Panc1 (cell line): ENCODE measurements at regions of chr10 and their contacts with region 1.

Region 1: DNA sequence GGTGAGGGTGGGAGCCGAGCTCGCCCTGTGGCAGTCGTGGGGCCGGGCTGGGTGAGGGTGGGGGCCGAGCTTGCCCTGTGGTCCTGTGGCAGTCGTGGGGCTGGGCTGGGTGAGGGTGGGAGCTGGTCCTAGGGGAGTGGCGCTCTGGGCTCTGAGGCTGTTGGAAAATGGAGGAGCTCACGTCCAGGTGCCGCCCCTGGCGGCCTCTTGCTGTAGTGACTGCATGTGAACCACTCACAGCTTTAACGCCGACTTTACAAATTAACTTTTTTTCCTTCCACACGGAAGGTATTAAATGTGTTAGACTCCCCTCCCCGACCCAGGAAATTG is 312.6 kb downstream of the WDR37 start:
- DNase-seq: no peak
- ATAC-seq: peak; percentile 84
- H3K4me3 ChIP-seq: no peak overlapping the region
- H3K27ac ChIP-seq: no peak overlapping the region
- H3K4me1 ChIP-seq: no peaks in the 10 kb centered on the region
- H3K27me3 ChIP-seq: no peaks in the 10 kb centered on the region
- CTCF ChIP-seq: peak; percentile 73

Region 2: GRCh38 chr10:1089017-1089689 is 279.7 kb before region 1 on chr10:
- CTCF ChIA-PET with region 1: interaction called, 13 read pairs
- POLR2A ChIA-PET with region 1: no interaction called
- in situ Hi-C with region 1: no loop called
- intact Hi-C with region 1: no loop called
- DNase-seq: no peak
- ATAC-seq: no peak
- H3K4me3 ChIP-seq: no peak overlapping the region
- H3K27ac ChIP-seq: no peak overlapping the region
- H3K4me1 ChIP-seq: no peaks in the 10 kb centered on the region
- H3K27me3 ChIP-seq: no peaks in the 10 kb centered on the region
- CTCF ChIP-seq: no peak

Region 3: GRCh38 chr10:1404323-1405260 is 35.8 kb after region 1 on chr10:
- CTCF ChIA-PET with region 1: interaction called, 10 read pairs
- POLR2A ChIA-PET with region 1: no interaction called
- in situ Hi-C with region 1: no loop called
- intact Hi-C with region 1: no loop called
- DNase-seq: no peak
- ATAC-seq: no peak
- H3K4me3 ChIP-seq: no peak overlapping the region
- H3K27ac ChIP-seq: no peak overlapping the region
- H3K4me1 ChIP-seq: no peaks in the 10 kb centered on the region; the same call in 1 of the 2 replicates
- H3K27me3 ChIP-seq: no peaks in the 10 kb centered on the region
- CTCF ChIP-seq: no peak

Region 4: GRCh38 chr10:1581189-1581588 is 212.4 kb after region 1 on chr10:
- CTCF ChIA-PET with region 1: interaction called, 15 read pairs
- POLR2A ChIA-PET with region 1: no interaction called
- in situ Hi-C with region 1: no loop called
- intact Hi-C with region 1: no loop called
- DNase-seq: no peak
- ATAC-seq: no peak
- H3K4me3 ChIP-seq: no peak overlapping the region
- H3K27ac ChIP-seq: no peak overlapping the region
- H3K4me1 ChIP-seq: no peaks in the 10 kb centered on the region
- H3K27me3 ChIP-seq: no peaks in the 10 kb centered on the region
- CTCF ChIP-seq: no peak